ENCODE measurements at regions of chr2 and their contacts with region 1.

Region 1: DNA sequence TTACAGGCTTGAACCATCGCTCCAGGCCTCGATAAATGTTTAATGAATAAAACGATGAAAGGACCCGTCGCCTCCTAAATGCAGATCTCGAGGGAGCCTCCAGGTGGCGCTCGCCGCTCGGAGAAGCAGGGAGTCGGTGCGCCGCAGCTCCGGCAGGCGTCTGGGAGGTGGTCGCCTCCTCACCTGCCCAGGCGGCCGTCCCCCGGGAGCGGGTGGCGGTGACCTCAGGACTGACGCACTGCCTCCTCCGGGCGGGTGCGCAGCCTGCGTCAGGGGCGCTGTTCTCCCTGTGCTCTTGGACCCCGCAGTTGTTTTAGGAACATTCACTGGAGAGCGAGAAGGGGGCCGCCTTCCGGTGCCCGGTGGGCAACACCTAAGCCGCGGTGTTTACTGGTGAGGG is 38.6 kb upstream of the POLE4 start:
- DNase-seq: peak; percentile 86
- H3K4me3 ChIP-seq: peak overlapping the region; percentile 42 to 58
- H3K27ac ChIP-seq: no peak overlapping the region
- H3K4me1 ChIP-seq: no peaks in the 10 kb centered on the region; a peak in 1 of 4 replicates
- H3K27me3 ChIP-seq: no peaks in the 10 kb centered on the region
- CTCF ChIP-seq: peak; percentile 75
- EP300 ChIP-seq: no peak
- RAD21 ChIP-seq: peak; percentile 90

Region 2: GRCh38 chr2:74897845-74898244 is 22.0 kb before region 1 on chr2:
- CTCF ChIA-PET with region 1: interaction called, 13 read pairs
- POLR2A ChIA-PET with region 1: no interaction called
- DNase-seq: no peak
- H3K4me3 ChIP-seq: no peak overlapping the region
- H3K27ac ChIP-seq: no peak overlapping the region
- H3K4me1 ChIP-seq: peaks cover 0 to 4% of the 10 kb centered on the region in 2 experiments; a peak in 1 of 4 replicates
- H3K27me3 ChIP-seq: no peaks in the 10 kb centered on the region
- CTCF ChIP-seq: no peak
- EP300 ChIP-seq: no peak
- RAD21 ChIP-seq: no peak

Region 3: DNA sequence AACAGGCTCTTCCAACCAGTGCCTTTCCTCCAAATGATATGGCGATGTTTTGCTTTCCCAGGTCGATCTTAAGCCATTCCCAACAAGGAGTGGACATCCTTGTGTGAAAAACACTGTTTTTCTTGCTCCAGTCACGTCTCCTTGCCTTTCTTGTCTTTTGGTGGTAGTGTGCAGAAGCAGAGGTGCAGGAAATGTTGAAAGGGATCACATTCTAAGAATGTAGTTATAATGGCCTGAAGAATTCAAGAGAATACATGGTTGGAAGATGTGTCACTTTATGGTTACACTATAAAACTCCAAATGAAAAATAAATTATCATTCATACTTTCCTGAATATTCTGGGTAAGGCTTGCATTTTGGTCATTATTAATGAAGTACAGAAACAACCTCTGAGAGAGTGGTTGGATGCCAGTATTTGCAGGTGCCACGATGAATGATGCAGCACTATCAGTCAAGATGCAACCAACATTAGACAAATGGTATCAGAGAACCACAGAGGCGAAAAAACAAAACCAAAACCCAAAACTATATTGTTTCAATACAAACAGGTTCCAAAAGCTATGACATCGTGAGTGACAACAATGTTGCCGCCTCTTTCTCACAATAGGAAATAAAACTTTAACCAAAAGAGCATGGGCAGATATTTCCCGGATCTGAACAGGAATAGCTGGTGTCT is 11.1 kb after region 1 on chr2:
- CTCF ChIA-PET with region 1: interaction called, 16 read pairs
- POLR2A ChIA-PET with region 1: no interaction called
- DNase-seq: no peak
- H3K4me3 ChIP-seq: no peak overlapping the region
- H3K27ac ChIP-seq: no peak overlapping the region
- H3K4me1 ChIP-seq: no peaks in the 10 kb centered on the region; a peak in 1 of 4 replicates
- H3K27me3 ChIP-seq: no peaks in the 10 kb centered on the region
- CTCF ChIP-seq: no peak
- EP300 ChIP-seq: no peak
- RAD21 ChIP-seq: no peak

Region 4: DNA sequence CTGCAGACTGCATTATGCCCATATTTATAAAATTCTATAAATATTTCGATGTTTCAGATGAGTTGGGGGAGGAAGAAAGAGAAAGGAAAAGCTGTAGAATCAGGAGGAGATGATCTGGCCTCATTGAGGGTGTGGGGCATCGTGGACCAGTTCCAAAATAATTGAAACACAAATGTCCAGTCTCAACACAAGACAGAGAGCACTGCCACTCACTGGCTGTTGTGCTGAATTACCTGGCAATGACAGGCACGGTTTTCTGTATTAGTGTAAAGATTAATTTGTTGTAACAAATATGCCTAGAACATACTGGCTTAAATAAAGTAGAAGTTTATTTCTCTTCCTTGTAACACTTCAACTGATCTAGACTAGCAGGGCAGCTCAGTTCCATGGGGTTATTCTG is 62.8 kb after region 1 on chr2:
- CTCF ChIA-PET with region 1: interaction called, 33 read pairs
- POLR2A ChIA-PET with region 1: no interaction called
- DNase-seq: no peak
- H3K4me3 ChIP-seq: no peak overlapping the region
- H3K27ac ChIP-seq: no peak overlapping the region
- H3K4me1 ChIP-seq: peaks cover 0 to 24% of the 10 kb centered on the region in 2 experiments; a peak in 2 of 4 replicates
- H3K27me3 ChIP-seq: no peaks in the 10 kb centered on the region
- CTCF ChIP-seq: peak; percentile 22; the same call in 1 of the 2 replicates
- EP300 ChIP-seq: no peak
- RAD21 ChIP-seq: peak; percentile 53

Region 5: DNA sequence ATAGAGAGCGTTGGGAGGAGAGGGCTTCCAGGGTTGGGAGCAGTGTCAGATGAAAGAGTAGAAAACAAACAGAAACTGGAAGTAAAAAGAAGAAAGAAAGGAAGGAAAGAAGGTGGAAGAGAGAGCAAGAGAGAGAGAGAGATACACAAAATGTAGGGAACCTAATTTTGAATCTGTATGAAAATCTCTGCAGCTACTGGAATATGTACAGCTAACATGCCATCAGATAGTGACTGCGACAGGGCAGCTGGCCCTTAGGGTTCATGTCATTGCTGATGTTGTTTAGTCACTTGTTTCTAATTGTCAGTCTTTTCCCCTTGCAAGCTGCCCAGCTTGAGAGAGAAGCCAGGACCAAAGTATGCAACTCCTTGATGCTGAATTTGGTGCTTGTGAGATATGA is 124.5 kb after region 1 on chr2:
- CTCF ChIA-PET with region 1: interaction called, 12 read pairs
- POLR2A ChIA-PET with region 1: no interaction called
- DNase-seq: peak; percentile 25
- H3K4me3 ChIP-seq: no peak overlapping the region
- H3K27ac ChIP-seq: no peak overlapping the region
- H3K4me1 ChIP-seq: peaks cover 0 to 18% of the 10 kb centered on the region in 2 experiments; a peak in 3 of 4 replicates
- H3K27me3 ChIP-seq: no peaks in the 10 kb centered on the region
- CTCF ChIP-seq: no peak
- EP300 ChIP-seq: no peak
- RAD21 ChIP-seq: no peak

Region 6: GRCh38 chr2:75199428-75200011 is 279.7 kb after region 1 on chr2 and contains the start of gene TACR1:
- CTCF ChIA-PET with region 1: interaction called, 24 read pairs
- POLR2A ChIA-PET with region 1: no interaction called
- DNase-seq: peak; percentile 78
- H3K4me3 ChIP-seq: peak within 1 kb of the TSS; percentile 34 to 53
- H3K27ac ChIP-seq: no peak within 1 kb of the TSS
- H3K4me1 ChIP-seq: peaks cover 0 to 20% of the 10 kb centered on the region in 2 experiments; a peak in 1 of 4 replicates
- H3K27me3 ChIP-seq: peaks cover 60% of the 10 kb centered on the region
- CTCF ChIP-seq: peak; percentile 67
- EP300 ChIP-seq: no peak
- RAD21 ChIP-seq: peak; percentile 54
- polyA plus RNA-seq, gene TACR1: under 0.01 TPM in 1 of 2 replicates, not detected in the other